Aorta (tissue), 5 donors: ENCODE measurements at regions of chr9 and their contacts with region 1.

Region 1: DNA sequence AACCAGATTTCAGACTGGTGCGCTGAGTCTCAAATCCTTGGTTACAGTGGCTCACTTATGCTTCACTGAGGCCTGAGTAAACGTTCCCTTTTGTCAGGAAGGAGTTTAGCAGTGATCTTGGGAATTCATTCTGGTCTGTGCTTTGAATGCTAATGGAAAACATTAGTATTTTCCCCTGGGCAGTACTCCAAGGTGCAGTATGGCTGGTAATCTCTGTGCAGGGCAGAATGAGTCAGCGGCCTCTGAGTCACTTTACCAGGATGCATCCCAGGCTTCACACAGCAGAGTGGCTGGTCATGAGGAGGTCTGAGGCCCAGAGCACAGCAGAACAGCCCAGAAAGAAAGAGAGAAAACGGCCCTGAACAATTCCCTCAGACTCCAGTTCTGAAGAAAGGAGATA is 54.0 kb downstream of the PCA3 start:
- DNase-seq: peak; percentile 92 to 93
- ATAC-seq: peak; percentile 97
- H3K4me3 ChIP-seq: no peak overlapping the region
- H3K27ac ChIP-seq: peak overlapping the region; percentile 33 to 99
- H3K4me1 ChIP-seq: peaks cover 0 to 3% of the 10 kb centered on the region in 2 donors
- H3K27me3 ChIP-seq: no peaks in the 10 kb centered on the region

Region 2: GRCh38 chr9:76004526-76004925 is 813.7 kb before region 1 on chr9:
- intact Hi-C with region 1: no loop called
- DNase-seq: no peak
- ATAC-seq: no peak
- H3K4me3 ChIP-seq: no peak overlapping the region
- H3K27ac ChIP-seq: no peak overlapping the region
- H3K4me1 ChIP-seq: peaks cover 0 to 1% of the 10 kb centered on the region in 2 donors
- H3K27me3 ChIP-seq: no peaks in the 10 kb centered on the region

Region 3: DNA sequence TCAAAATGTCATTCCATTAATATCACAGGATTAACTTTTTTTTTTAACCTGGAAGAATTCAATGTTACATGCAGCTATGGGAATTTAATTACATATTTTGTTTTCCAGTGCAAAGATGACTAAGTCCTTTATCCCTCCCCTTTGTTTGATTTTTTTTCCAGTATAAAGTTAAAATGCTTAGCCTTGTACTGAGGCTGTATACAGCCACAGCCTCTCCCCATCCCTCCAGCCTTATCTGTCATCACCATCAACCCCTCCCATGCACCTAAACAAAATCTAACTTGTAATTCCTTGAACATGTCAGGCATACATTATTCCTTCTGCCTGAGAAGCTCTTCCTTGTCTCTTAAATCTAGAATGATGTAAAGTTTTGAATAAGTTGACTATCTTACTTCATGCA is 33.4 kb before region 1 on chr9:
- intact Hi-C with region 1: no loop called
- DNase-seq: no peak
- ATAC-seq: no peak
- H3K4me3 ChIP-seq: no peak overlapping the region
- H3K27ac ChIP-seq: no peak overlapping the region
- H3K4me1 ChIP-seq: no peaks in the 10 kb centered on the region
- H3K27me3 ChIP-seq: no peaks in the 10 kb centered on the region

Region 4: DNA sequence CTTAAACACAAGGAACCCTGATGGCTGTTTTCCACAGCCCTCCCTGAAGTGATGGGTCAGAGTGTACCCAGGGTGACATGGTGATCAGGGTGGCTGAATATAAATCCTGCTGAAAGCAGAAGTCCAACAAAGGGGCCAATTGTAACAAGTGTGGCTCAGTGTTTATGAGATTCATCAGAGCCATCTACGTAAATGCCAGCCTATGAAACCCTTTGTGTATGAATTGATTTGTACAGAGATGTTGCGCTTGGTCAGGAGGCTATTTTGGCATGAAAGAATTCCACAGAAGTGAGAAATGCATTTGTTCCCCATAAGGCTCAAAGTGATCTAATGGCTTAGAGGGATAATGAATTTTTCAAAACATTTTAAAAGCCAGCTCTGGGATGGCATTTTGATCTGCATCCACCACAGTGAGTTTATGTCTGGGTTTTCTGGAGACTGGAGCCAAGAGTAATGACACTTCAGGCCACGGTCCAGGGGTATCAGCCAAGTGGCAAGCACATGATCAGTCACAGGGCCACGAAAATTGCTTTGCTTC is 75.2 kb after region 1 on chr9:
- intact Hi-C with region 1: loop called in 1 of 2 experiments (anchors 5 kb)
- DNase-seq: peak; percentile 72 to 81
- ATAC-seq: peak; percentile 84
- H3K4me3 ChIP-seq: no peak overlapping the region
- H3K27ac ChIP-seq: peak overlapping the region; percentile 44 to 80
- H3K4me1 ChIP-seq: peaks cover 15 to 22% of the 10 kb centered on the region in 2 donors
- H3K27me3 ChIP-seq: no peaks in the 10 kb centered on the region

Region 5: DNA sequence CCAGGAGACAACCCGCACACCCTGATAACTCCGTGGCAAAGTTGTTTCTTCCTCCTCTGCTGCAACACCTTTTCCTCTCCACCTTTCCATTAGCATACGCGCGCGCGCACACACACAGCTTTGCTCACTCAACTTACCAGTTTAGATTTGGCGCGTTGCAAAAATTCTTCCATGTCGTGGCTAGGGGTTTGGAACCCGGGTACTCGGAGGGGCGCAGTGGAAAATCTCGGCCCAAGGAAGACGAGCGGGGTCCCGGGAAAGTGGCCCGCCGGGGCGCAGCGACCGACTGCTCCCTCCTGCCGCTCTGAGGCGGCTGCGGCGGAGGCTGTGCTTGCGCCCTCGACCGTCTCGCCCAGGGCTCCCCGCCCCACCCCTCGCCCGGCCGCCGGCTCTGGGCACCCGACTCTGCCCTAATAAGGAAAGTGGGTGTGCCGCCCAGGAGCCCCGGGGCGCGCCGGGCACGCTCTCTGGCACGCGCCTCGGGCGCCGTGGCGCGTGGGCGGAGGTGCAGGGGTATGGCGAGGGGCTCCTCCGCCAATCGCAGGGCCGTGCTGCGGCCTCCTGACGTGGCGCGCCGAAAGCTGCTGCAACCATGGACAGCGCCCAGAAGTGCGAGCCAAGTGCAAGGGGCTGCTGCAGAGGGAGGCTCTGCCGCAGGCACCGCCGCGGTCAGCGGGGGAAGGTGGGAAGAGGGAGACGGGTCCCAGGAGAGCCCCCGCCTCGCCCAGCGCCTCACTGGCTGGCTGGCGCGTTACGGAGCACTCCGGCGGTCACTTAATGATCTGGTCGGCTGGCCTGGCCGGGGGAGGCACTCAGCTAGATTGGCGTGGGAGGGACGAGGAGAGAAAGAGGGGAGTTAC is 87.8 kb after region 1 on chr9 and contains the start of gene PRUNE2:
- intact Hi-C with region 1: loop called in 1 of 2 experiments (anchors 5 kb)
- DNase-seq: peak; percentile 88 to 94
- ATAC-seq: peak; percentile 93
- H3K4me3 ChIP-seq: peak within 1 kb of the TSS; percentile 97
- H3K27ac ChIP-seq: peak within 1 kb of the TSS; percentile 62
- H3K4me1 ChIP-seq: peaks cover 4 to 6% of the 10 kb centered on the region in 2 donors
- H3K27me3 ChIP-seq: no peaks in the 10 kb centered on the region
- total RNA-seq, gene PRUNE2: 304 to 558 TPM

Region 6: GRCh38 chr9:76926324-76926731 is 108.1 kb after region 1 on chr9:
- intact Hi-C with region 1: loop called in 1 of 2 experiments (anchors 5 kb)
- DNase-seq: peak in 1 of 2 donors; percentile 57
- ATAC-seq: peak; percentile 87
- H3K4me3 ChIP-seq: no peak overlapping the region
- H3K27ac ChIP-seq: peak overlapping the region in 1 of 2 donors; percentile 48
- H3K4me1 ChIP-seq: no peaks in the 10 kb centered on the region
- H3K27me3 ChIP-seq: no peaks in the 10 kb centered on the region